SK-N-SH (cell line): ENCODE measurements at regions of chr11 and their contacts with region 1.

Region 1: DNA sequence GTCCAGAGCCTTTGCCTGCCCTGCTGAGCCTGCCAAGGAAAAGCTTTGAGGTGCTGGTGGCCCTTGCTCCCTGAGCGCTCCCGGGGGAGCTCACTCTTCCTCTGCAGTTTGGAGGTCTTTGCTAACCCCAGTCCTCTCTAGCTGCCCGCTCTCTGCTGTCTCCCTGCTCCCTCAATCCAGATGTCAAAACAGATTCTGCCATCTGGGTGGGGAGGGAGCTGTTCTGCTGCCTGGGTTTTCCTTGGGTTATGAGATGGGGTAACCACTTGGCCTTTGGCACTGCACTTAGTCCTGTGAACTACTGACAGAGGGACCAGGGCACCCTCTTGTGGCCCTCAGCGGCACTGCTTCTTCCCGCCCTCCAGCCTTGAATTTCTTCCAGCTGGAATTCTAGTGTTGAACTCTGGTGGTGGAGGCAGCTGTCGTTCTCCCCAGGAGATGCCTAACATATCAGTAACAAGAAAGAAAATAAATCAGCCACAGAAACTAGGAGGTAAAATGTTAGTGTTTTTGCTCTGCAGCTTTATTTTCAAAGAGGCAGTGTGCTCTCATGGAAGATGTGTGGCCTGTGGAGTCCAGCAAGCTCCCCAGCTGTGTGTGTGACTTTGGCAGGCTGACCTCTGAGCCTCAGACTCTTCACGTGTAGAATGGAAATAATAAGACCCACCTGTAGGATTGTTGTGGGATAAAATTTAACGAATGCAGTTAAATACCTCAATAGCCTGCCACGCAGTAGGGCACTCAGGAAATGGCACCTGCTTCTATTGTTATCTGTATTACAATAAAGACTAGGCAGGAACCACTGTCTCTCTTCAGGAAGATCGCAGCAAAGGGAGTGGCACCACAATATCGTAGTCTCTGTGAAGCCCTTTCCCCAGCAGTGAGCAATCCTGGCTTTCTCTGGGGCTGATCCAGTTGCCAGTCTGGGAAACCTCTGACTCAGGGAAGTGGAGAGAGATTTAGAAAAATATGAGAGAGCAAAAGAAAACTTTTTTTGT is 23.4 kb downstream of the ARFGAP2 start:
- DNase-seq: peak; percentile 89
- H3K4me3 ChIP-seq: peak overlapping the region in 1 of 2 experiments; percentile 39; a peak in 1 of 4 replicates
- H3K27ac ChIP-seq: peak overlapping the region; percentile 49 to 66
- H3K4me1 ChIP-seq: peaks cover 20 to 22% of the 10 kb centered on the region in 2 experiments; a peak in 2 of 4 replicates
- H3K27me3 ChIP-seq: no peaks in the 10 kb centered on the region
- CTCF ChIP-seq: peak; percentile 98
- EP300 ChIP-seq: no peak
- RAD21 ChIP-seq: peak; percentile 99

Region 2: GRCh38 chr11:46876471-46876870 is 276.8 kb before region 1 on chr11:
- CTCF ChIA-PET with region 1: interaction called, 101 read pairs
- POLR2A ChIA-PET with region 1: no interaction called
- DNase-seq: no peak
- H3K4me3 ChIP-seq: no peak overlapping the region
- H3K27ac ChIP-seq: no peak overlapping the region
- H3K4me1 ChIP-seq: peaks cover 0 to 2% of the 10 kb centered on the region in 2 experiments; a peak in 1 of 4 replicates
- H3K27me3 ChIP-seq: no peaks in the 10 kb centered on the region
- CTCF ChIP-seq: no peak
- EP300 ChIP-seq: no peak
- RAD21 ChIP-seq: no peak

Region 3: DNA sequence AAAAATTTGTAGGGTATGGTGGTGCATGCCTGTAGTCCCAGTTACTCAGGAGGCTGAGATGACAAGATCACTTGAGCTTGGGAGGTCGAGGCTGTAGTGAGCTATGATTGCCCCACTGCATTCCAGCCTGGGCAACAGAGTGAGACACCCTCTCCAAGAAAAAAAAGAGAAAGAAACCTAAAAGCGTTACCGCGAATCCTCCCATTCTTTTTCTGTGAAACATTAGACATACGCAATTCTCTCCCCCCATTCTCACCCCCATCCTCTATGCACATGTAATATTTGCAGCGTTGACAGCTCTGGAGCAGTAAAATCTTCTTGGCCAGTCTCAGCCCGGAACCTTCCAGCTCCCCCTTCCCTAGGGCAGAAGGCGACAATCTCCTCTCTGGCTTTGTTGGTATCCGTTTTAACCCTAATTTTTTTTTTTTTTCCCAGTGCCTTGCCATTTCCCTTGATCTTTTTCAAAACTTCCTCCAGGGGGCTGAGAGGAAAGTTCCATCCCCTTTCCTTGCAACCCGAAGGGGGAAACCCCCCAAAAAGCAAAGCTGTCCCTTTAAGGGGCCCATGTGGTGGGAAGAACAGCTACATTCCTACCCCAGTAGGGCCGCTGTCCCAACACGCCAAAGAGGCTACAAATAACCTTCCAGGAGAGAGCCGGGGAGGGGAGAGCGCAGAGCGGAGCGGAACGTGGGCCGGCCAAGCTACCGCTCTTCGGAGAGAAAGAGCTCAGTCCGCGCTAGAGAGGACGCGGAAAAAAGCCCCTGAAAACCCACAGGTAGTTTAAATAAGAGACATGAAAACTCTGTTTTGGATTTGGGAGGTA is 236.8 kb before region 1 on chr11:
- CTCF ChIA-PET with region 1: interaction called, 170 read pairs
- POLR2A ChIA-PET with region 1: no interaction called
- DNase-seq: peak; percentile 81
- H3K4me3 ChIP-seq: peak overlapping the region; percentile 71 to 73
- H3K27ac ChIP-seq: peak overlapping the region; percentile 74 to 80; a peak in 3 of 4 replicates
- H3K4me1 ChIP-seq: peaks cover 38 to 49% of the 10 kb centered on the region in 2 experiments; a peak in 3 of 4 replicates
- H3K27me3 ChIP-seq: no peaks in the 10 kb centered on the region
- CTCF ChIP-seq: peak; percentile 51
- EP300 ChIP-seq: 0 out of 4 replicates have a peak, but pooled peaks of 1 of the 2 experiments have one; percentile 6
- RAD21 ChIP-seq: no peak

Region 4: GRCh38 chr11:46942178-46942577 is 211.1 kb before region 1 on chr11:
- CTCF ChIA-PET with region 1: interaction called, 27 read pairs
- POLR2A ChIA-PET with region 1: interaction called, 3 read pairs
- DNase-seq: no peak
- H3K4me3 ChIP-seq: no peak overlapping the region
- H3K27ac ChIP-seq: no peak overlapping the region
- H3K4me1 ChIP-seq: peaks cover 0 to 7% of the 10 kb centered on the region in 2 experiments; a peak in 3 of 4 replicates
- H3K27me3 ChIP-seq: no peaks in the 10 kb centered on the region
- CTCF ChIP-seq: no peak
- EP300 ChIP-seq: no peak
- RAD21 ChIP-seq: no peak

Region 5: DNA sequence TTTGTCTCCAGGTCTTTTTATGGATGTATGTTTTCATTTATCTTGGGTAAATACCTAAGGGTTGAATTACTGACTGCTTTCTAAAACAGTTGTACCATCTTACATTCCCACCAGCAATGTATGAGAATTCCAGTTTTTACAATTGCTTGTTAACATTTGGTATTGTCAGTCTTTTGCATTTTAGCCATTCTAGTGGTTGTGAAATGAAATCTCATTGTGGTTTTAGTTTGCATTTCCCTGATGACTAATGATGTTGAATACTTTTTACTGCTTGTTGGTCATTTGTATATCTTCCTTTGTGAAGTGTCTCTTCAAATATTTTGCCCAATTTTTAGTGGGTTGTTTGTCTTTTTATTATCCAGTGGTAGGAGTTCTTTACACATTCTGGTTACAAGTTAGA is 69.3 kb before region 1 on chr11:
- CTCF ChIA-PET with region 1: interaction called, 10 read pairs
- POLR2A ChIA-PET with region 1: no interaction called
- DNase-seq: no peak
- H3K4me3 ChIP-seq: no peak overlapping the region
- H3K27ac ChIP-seq: no peak overlapping the region
- H3K4me1 ChIP-seq: no peaks in the 10 kb centered on the region
- H3K27me3 ChIP-seq: no peaks in the 10 kb centered on the region
- CTCF ChIP-seq: no peak
- EP300 ChIP-seq: no peak
- RAD21 ChIP-seq: no peak